B cell (primary cell): ENCODE measurements at regions of chr3 and their contacts with region 1.

Region 1: DNA sequence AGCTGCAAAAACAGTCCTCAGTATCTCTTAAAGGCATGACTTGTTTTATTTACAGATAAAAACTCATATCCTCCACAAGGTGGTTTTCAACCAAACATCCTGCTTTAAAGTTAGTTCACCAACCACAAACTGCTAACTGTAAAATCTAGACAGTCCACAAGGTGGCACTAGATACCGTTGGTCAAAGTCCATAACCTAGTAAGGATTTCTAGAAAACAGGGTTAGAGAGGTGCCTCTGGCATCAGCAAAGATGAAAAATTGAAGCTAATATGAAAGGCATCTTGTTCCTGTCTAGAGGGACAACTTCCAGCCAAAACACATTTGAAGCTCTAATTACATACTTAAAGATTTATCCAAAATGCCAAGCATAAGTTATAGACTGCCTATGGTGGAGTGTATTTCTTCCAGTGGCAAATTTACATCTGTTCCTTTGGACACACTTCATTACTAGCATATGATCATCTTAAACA is 56.0 kb downstream of the ZMAT3 start:
- DNase-seq: peak; percentile 87
- ATAC-seq: peak; percentile 83
- H3K4me3 ChIP-seq: no peak overlapping the region
- H3K4me3 Mint-ChIP-seq: peak overlapping the region; percentile 41
- H3K27ac ChIP-seq: peak overlapping the region in 1 of 2 donors; percentile 81
- H3K27ac Mint-ChIP-seq: peak overlapping the region; percentile 75
- H3K4me1 ChIP-seq: peaks cover 16 to 34% of the 10 kb centered on the region in 2 donors
- H3K4me1 Mint-ChIP-seq: peaks cover 50% of the 10 kb centered on the region
- H3K27me3 ChIP-seq: no peaks in the 10 kb centered on the region
- H3K27me3 Mint-ChIP-seq: no peaks in the 10 kb centered on the region
- CTCF ChIP-seq: peak; percentile 94

Region 2: DNA sequence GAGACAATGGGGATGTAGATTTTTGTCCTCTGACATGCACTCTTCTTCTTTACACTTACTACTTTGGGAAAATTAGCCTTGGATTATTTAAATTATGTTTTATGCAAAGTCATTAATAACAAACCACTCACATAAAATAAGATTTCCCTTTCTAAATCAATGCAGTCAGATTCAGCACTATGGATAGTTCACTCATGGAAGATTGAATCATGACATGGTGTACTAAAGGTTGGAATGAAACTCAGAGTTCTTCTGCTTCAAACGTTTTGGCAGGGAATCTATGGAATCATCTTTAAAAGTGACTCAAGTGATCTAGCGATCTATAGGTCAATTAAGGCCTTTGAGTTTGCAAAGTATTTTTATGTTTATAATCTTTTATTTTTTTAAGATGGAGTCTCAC is 325.0 kb before region 1 on chr3:
- CTCF ChIA-PET with region 1: no interaction called
- POLR2A ChIA-PET with region 1: no interaction called
- intact Hi-C with region 1: no loop called
- DNase-seq: no peak
- ATAC-seq: no peak
- H3K4me3 ChIP-seq: no peak overlapping the region
- H3K4me3 Mint-ChIP-seq: no peak overlapping the region
- H3K27ac ChIP-seq: no peak overlapping the region
- H3K27ac Mint-ChIP-seq: no peak overlapping the region
- H3K4me1 ChIP-seq: no peaks in the 10 kb centered on the region
- H3K4me1 Mint-ChIP-seq: no peaks in the 10 kb centered on the region
- H3K27me3 ChIP-seq: no peaks in the 10 kb centered on the region
- H3K27me3 Mint-ChIP-seq: no peaks in the 10 kb centered on the region
- CTCF ChIP-seq: no peak

Region 3: GRCh38 chr3:178875836-178876235 is 139.8 kb before region 1 on chr3:
- CTCF ChIA-PET with region 1: no interaction called
- POLR2A ChIA-PET with region 1: no interaction called
- intact Hi-C with region 1: no loop called
- DNase-seq: no peak
- ATAC-seq: no peak
- H3K4me3 ChIP-seq: no peak overlapping the region
- H3K4me3 Mint-ChIP-seq: no peak overlapping the region
- H3K27ac ChIP-seq: no peak overlapping the region
- H3K27ac Mint-ChIP-seq: no peak overlapping the region
- H3K4me1 ChIP-seq: no peaks in the 10 kb centered on the region
- H3K4me1 Mint-ChIP-seq: no peaks in the 10 kb centered on the region
- H3K27me3 ChIP-seq: no peaks in the 10 kb centered on the region
- H3K27me3 Mint-ChIP-seq: no peaks in the 10 kb centered on the region
- CTCF ChIP-seq: no peak

Region 4: DNA sequence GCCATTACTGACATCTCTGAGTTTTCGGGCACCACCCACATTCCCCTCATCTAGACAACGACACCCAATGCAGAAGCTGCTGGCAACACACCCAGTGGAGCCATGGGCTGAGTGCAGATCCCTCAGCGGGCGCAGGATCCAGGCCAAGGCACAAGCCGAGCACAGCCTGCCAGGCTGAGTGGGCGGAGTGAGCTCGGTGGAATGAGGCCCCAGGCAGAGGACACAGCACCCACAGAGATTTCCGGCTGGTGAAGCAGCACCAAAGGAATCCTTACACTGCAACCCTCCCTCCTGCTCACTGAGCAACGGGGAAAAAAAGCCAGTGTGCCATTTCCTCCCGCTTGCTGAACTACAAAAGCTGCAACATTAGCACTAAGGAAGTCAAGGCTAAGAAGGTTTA is 21.8 kb after region 1 on chr3:
- CTCF ChIA-PET with region 1: interaction called, 10 read pairs
- POLR2A ChIA-PET with region 1: no interaction called
- intact Hi-C with region 1: no loop called
- DNase-seq: no peak
- ATAC-seq: no peak
- H3K4me3 ChIP-seq: no peak overlapping the region
- H3K4me3 Mint-ChIP-seq: no peak overlapping the region
- H3K27ac ChIP-seq: no peak overlapping the region
- H3K27ac Mint-ChIP-seq: no peak overlapping the region
- H3K4me1 ChIP-seq: peaks cover 0 to 2% of the 10 kb centered on the region in 2 donors
- H3K4me1 Mint-ChIP-seq: peaks cover 16% of the 10 kb centered on the region
- H3K27me3 ChIP-seq: no peaks in the 10 kb centered on the region
- H3K27me3 Mint-ChIP-seq: no peaks in the 10 kb centered on the region
- CTCF ChIP-seq: no peak

Region 5: DNA sequence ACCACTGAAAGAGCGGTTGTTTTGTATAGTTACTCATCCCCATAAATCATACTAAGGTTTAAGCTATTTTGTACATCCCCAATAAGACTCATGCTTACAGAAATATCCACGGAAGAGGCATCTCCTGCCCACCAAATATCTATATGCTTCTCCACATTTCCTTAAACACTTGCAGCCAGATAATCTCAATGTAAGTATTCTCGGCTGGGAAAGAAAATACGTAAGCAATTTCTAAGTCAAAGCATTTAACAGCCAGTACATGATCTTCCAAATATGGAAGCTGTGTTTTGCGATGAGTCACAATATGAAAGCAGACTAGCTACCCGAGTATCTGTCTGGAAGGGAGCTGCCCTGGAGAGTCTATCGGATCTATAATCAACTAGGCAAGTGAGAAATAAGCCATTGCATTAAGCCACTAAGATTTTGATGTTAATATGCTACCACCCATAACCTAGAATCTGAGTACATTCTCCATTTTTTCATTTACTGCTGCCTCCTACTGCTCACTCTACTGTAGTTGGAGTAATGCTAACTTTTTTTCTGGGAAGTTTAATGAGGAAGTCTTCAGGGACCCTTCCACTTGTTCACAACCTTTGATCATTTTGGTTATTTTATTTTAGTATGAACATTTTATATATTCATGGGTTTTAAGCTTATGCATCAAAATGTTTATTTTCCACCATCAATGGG is 82.9 kb after region 1 on chr3:
- CTCF ChIA-PET with region 1: interaction called, 30 read pairs
- POLR2A ChIA-PET with region 1: no interaction called
- intact Hi-C with region 1: no loop called
- DNase-seq: no peak
- ATAC-seq: no peak
- H3K4me3 ChIP-seq: no peak overlapping the region
- H3K4me3 Mint-ChIP-seq: no peak overlapping the region
- H3K27ac ChIP-seq: no peak overlapping the region
- H3K27ac Mint-ChIP-seq: no peak overlapping the region
- H3K4me1 ChIP-seq: no peaks in the 10 kb centered on the region
- H3K4me1 Mint-ChIP-seq: no peaks in the 10 kb centered on the region
- H3K27me3 ChIP-seq: no peaks in the 10 kb centered on the region
- H3K27me3 Mint-ChIP-seq: peaks cover 3% of the 10 kb centered on the region
- CTCF ChIP-seq: no peak

Region 6: GRCh38 chr3:179260949-179261765 is 245.6 kb after region 1 on chr3:
- CTCF ChIA-PET with region 1: interaction called, 6 read pairs
- POLR2A ChIA-PET with region 1: no interaction called
- intact Hi-C with region 1: loop called (anchors 5 kb)
- DNase-seq: peak; percentile 78
- ATAC-seq: peak; percentile 92
- H3K4me3 ChIP-seq: peak overlapping the region; percentile 48 to 77 (median 67)
- H3K4me3 Mint-ChIP-seq: peak overlapping the region; percentile 89
- H3K27ac ChIP-seq: peak overlapping the region in 1 of 2 donors; percentile 66
- H3K27ac Mint-ChIP-seq: peak overlapping the region; percentile 84
- H3K4me1 ChIP-seq: peaks cover 15 to 23% of the 10 kb centered on the region in 2 donors
- H3K4me1 Mint-ChIP-seq: peaks cover 52% of the 10 kb centered on the region
- H3K27me3 ChIP-seq: no peaks in the 10 kb centered on the region
- H3K27me3 Mint-ChIP-seq: no peaks in the 10 kb centered on the region
- CTCF ChIP-seq: no peak

Region 7: DNA sequence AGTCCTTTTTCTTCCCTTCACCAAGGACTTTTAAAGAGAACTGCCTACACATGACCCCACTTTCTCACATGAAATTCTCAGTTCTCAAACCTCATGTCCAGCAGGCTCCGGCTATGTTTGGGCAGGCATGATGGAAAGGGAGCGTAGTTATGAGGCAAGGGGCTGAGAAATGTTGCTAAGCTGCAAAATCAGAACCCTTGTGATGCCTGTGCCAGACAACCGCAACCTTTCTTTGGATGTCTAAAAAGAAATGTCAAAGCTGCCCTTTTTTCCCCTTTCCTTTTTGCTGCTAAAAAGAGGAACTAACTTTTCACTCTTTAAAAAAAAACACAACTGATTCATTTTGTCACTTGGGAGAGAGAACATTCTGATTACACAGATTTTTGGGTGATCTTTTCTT is 416.4 kb after region 1 on chr3:
- CTCF ChIA-PET with region 1: no interaction called
- POLR2A ChIA-PET with region 1: no interaction called
- intact Hi-C with region 1: loop called (anchors 5 kb)
- DNase-seq: peak; percentile 61
- ATAC-seq: peak; percentile 75
- H3K4me3 ChIP-seq: peak overlapping the region in 4 of 5 experiments; percentile 23 to 44 (median 34)
- H3K4me3 Mint-ChIP-seq: peak overlapping the region; percentile 38
- H3K27ac ChIP-seq: peak overlapping the region; percentile 22 to 67
- H3K27ac Mint-ChIP-seq: peak overlapping the region; percentile 46
- H3K4me1 ChIP-seq: peaks cover 30 to 44% of the 10 kb centered on the region in 2 donors
- H3K4me1 Mint-ChIP-seq: peaks cover 51% of the 10 kb centered on the region
- H3K27me3 ChIP-seq: no peaks in the 10 kb centered on the region
- H3K27me3 Mint-ChIP-seq: no peaks in the 10 kb centered on the region
- CTCF ChIP-seq: no peak